ENCODE measurements at regions of chr11 and their contacts with region 1.

Region 1: GRCh38 chr11:123478352-123478987 is 48.4 kb downstream of the GRAMD1B start:
- DNase-seq: peak; percentile 71 to 80
- ATAC-seq: peak; percentile 50 to 57; a peak in 3 of 6 replicates
- H3K4me3 ChIP-seq: no peak overlapping the region
- H3K27ac ChIP-seq: peak overlapping the region; percentile 58 to 96
- H3K4me1 ChIP-seq: peaks cover 80% of the 10 kb centered on the region
- CTCF ChIP-seq: peak; percentile 69
- EP300 ChIP-seq: no peak
- POLR2A ChIP-seq: no peak
- RAD21 ChIP-seq: peak; percentile 84 to 85

Region 2: GRCh38 chr11:123261345-123262106 is 216.9 kb before region 1 on chr11:
- CTCF ChIA-PET with region 1: interaction called, 15 read pairs
- POLR2A ChIA-PET with region 1: no interaction called
- DNase-seq: peak; percentile 71 to 73
- ATAC-seq: peak; percentile 96 to 99
- H3K4me3 ChIP-seq: peak overlapping the region; percentile 30
- H3K27ac ChIP-seq: peak overlapping the region; percentile 61 to 79; a peak in 4 of 6 replicates
- H3K4me1 ChIP-seq: no peaks in the 10 kb centered on the region
- CTCF ChIP-seq: peak; percentile 82
- EP300 ChIP-seq: no peak
- POLR2A ChIP-seq: no peak
- RAD21 ChIP-seq: peak; percentile 79 to 83

Region 3: GRCh38 chr11:123301696-123302400 is 176.6 kb before region 1 on chr11:
- CTCF ChIA-PET with region 1: interaction called, 15 read pairs
- POLR2A ChIA-PET with region 1: no interaction called
- DNase-seq: peak; percentile 29 to 44
- ATAC-seq: peak; percentile 80 to 95
- H3K4me3 ChIP-seq: peak overlapping the region; percentile 38
- H3K27ac ChIP-seq: peak overlapping the region; percentile 55 to 86; a peak in 5 of 6 replicates
- H3K4me1 ChIP-seq: peaks cover 17% of the 10 kb centered on the region; the same call in 2 of the 3 replicates
- CTCF ChIP-seq: peak; percentile 79
- EP300 ChIP-seq: no peak
- POLR2A ChIP-seq: no peak
- RAD21 ChIP-seq: peak; percentile 45 to 78; a peak in 4 of 5 replicates

Region 4: GRCh38 chr11:123413636-123414035 is 64.8 kb before region 1 on chr11:
- CTCF ChIA-PET with region 1: interaction called, 147 read pairs
- POLR2A ChIA-PET with region 1: no interaction called
- DNase-seq: no peak
- ATAC-seq: no peak
- H3K4me3 ChIP-seq: no peak overlapping the region
- H3K27ac ChIP-seq: no peak overlapping the region; a peak in 1 of 6 replicates
- H3K4me1 ChIP-seq: peaks cover 12% of the 10 kb centered on the region
- CTCF ChIP-seq: no peak
- EP300 ChIP-seq: no peak
- POLR2A ChIP-seq: no peak
- RAD21 ChIP-seq: no peak

Region 5: GRCh38 chr11:123490532-123490931 is 12.1 kb after region 1 on chr11:
- CTCF ChIA-PET with region 1: interaction called, 11 read pairs
- POLR2A ChIA-PET with region 1: no interaction called
- DNase-seq: no peak
- ATAC-seq: no peak
- H3K4me3 ChIP-seq: no peak overlapping the region
- H3K27ac ChIP-seq: no peak overlapping the region
- H3K4me1 ChIP-seq: peaks cover 32% of the 10 kb centered on the region
- CTCF ChIP-seq: no peak
- EP300 ChIP-seq: no peak
- POLR2A ChIP-seq: no peak
- RAD21 ChIP-seq: no peak

Measured in A549 (cell line).